Activated CD4-positive, alpha-beta memory T cell treated with anti-CD3 and anti-CD28 coated beads for 36 hours (primary cell): ENCODE measurements at regions of chr11 and their contacts with region 1.

Region 1: DNA sequence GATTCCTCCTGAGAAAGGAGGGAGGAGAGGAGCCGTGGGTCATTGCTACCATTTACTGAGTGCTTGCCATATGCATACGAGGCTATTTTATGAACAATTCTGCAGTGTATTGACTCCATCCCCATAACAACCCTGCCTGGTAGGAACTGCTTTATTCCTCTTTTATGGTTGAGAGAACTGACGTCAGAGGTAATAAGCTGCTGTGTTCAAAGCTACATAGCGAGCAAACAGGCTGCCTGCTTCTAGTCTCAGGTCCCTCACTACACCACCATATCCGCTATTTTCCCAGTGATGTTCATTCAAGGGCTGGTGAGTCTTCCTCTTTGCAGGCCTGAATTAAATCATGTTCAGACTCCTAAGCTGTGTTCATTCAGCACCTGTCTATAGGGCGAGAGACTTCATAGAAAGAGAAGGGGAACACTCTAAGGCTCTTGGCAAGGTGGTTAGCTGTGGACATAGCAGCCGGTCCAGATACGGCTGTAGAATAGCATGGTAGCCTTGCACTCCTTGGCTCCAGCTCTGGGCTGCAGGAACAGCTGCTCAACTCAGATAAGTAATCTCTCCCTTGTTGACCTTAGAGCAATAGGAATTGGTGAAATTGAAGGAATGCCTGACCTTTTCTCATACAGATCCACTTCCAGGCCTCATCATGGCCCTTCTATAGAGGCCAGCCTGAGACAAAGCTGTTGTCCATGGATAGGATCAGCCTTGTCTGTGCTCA is 82.6 kb downstream of the MICAL2 start:
- DNase-seq: no peak
- H3K4me3 Mint-ChIP-seq: no peak overlapping the region
- H3K27ac Mint-ChIP-seq: no peak overlapping the region
- H3K4me1 Mint-ChIP-seq: peaks cover 73% of the 10 kb centered on the region
- H3K27me3 Mint-ChIP-seq: no peaks in the 10 kb centered on the region

Region 2: DNA sequence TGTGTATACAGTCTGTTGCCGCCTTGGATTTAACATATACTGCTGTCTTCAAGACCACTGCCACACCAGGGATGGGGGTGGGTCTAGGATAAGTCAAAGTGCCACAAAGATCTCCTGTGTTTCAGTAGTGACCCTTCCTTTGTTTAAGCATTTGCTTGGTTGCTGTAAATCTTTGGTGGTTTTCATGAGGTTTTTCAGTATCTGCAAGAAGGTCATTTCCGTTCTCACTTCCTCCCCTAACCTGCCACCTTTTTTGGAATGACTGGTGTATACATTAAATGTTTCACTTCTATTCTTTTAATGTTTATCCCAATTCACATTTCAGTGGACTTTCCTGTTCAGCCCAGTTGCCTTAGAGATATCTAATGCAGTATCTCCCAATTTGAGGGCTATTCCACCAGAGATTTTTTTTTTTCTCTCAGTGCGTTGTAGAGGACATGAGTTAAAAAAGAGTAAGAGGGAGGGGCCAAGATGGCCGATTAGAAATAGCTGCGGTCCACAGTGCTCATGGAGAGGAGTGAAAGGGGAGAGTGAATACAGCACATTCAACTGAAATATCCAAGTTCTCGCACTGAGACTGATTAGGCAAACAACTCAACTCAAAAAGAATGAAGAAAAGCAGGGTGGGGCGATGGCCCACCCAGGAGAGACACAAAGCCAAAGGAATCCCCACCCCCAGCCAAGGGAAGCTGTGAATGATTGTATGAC is 308.0 kb before region 1 on chr11:
- CTCF ChIA-PET with region 1: no interaction called
- POLR2A ChIA-PET with region 1: no interaction called
- intact Hi-C with region 1: no loop called
- DNase-seq: no peak
- H3K4me3 Mint-ChIP-seq: no peak overlapping the region
- H3K27ac Mint-ChIP-seq: no peak overlapping the region
- H3K4me1 Mint-ChIP-seq: peaks cover 56% of the 10 kb centered on the region
- H3K27me3 Mint-ChIP-seq: no peaks in the 10 kb centered on the region

Region 3: DNA sequence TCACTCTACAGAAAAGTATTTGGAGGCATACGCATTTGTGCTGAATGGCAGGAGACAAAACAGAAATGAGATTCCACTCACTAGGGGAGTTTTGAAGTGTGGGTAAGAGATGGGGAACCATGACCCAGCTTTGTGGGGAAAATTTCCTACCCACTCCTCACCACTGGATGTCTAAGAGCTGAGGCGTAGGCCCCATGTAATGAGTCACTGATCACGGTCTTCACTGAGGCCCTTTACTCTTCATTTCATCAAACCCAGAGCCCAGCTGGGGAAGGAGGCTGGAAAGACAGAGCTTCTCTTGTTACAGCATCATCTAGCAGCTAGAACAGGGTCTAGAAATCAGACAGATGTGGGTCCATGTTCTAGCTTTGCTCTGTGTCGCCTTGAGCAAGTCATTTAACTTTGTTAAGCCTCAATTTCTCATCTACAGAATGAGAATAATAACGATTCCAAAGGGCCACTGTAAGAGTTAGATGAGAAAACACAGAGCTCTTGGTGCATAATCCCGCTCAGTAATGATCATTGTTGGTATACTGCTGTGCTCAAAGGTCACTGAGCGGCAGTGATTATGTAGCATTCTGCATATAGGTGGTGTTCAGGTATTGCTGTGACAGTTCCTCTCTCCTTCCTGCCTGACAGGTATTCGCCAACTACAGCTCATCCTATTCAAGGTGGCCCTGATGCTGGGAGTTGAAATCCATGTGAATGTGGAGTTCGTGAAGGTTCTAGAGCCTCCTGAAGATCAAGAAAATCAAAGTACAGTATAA is 14.6 kb after region 1 on chr11:
- CTCF ChIA-PET with region 1: interaction called, 10 read pairs
- POLR2A ChIA-PET with region 1: interaction called, 21 read pairs
- intact Hi-C with region 1: loop called (anchors 1 kb)
- DNase-seq: peak; percentile 84
- H3K4me3 Mint-ChIP-seq: peak overlapping the region; percentile 14
- H3K27ac Mint-ChIP-seq: peak overlapping the region; percentile 87
- H3K4me1 Mint-ChIP-seq: peaks cover 69% of the 10 kb centered on the region
- H3K27me3 Mint-ChIP-seq: no peaks in the 10 kb centered on the region